ENCODE measurements at regions of chr14 and their contacts with region 1.

Region 1: DNA sequence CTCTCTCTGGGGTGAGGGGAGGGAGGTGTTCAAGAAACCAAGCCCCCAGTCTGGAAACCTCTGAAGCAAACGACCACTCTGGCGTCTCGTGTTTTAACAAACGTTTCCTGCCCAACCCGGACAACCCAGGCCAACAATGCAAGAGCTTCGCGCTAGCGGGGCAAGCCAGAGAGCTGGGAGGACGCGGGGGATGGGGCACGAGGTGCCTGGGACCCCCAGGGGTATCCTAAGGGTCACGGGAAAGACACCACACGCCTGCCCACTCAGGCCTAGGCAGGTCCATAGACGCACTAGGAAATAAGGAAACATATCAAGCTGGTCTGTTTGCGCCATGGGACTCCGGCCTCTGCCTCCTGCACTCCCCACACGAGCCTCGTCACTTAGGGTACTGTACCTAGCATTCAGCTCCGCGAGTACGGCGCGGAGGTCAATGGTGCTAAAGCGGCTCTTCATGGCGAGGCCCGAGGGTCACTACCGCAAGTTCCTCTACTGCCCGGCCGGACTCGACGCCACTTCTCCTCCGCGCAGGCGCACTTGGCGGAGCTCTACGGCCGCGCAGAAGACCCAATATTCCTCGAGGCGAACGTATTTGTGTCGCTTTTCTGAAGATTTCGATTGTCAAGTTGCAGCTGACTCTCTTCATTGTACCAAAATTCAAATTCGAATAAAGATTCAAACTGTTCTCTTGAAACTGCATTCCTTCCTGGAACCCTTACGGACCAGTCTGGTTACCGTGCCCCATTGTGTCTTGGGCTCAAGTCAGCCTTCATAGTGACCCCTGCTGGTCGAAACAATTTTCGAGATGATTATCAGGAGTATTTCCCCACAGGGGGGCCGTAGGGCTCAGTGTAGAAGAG is at the start of gene NEMF:
- DNase-seq: peak; percentile 78
- ATAC-seq: peak; percentile 83
- H3K4me3 Mint-ChIP-seq: peak within 1 kb of the TSS; percentile 99
- H3K27ac Mint-ChIP-seq: peak within 1 kb of the TSS; percentile 98
- H3K4me1 Mint-ChIP-seq: peaks cover 47% of the 10 kb centered on the region
- H3K27me3 Mint-ChIP-seq: no peaks in the 10 kb centered on the region
- CTCF ChIP-seq: peak; percentile 27
- total RNA-seq, gene NEMF: 99.1 and 110 TPM in 2 replicates

Region 2: DNA sequence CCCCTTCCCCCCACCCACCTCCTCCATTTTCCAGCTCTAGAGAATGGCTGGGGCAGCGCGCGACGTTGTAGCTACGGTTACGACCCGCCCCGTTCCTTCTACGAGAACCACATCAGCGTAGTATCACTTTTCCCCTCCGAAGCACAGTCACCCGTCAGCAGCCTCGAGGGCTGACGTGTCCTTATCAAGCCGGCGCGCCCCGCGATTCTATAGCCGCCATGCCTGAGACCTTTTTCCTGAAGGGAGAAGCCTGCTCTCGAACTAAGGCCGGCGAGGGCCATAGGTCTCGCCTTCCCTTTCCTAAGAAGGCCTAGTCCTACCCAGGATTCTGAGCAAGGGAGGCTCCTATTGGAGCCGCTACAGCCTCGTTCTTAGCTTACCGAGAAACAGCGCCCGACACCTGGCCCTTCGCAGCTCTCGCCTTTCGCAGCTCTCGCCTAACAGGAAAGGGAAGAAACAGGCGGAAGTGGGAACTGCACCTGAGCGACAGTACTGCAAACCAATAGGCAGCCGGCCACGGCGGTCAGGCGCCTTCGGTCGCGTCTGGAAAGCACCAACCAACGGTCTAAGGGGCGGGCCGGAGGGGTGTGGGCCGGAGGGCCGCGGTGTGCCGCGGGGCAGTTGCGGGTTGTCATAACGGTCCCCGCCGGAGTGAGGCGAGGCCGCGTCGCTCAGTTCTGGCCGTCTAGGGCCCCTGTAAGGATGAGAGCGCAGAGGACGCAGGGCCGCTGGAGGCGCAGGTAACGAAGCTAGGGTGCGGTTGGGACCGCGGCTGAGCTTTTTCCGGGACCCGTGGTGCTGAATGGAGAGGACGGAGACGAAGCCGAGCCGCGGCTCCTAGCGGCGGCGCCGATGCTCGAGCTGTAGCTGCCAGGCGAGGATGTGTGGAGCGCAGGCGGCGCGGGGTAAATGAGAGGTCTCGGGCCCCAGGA is 232.1 kb before region 1 on chr14 and contains the starts of genes MGAT2 and RPL36AL:
- CTCF ChIA-PET with region 1: interaction called, 3 read pairs
- POLR2A ChIA-PET with region 1: interaction called, 23 read pairs
- intact Hi-C with region 1: no loop called
- DNase-seq: peak; percentile 90
- ATAC-seq: peak; percentile 90
- H3K4me3 Mint-ChIP-seq: peak within 1 kb of the TSS; percentile 97
- H3K27ac Mint-ChIP-seq: peak within 1 kb of the TSS; percentile 97
- H3K4me1 Mint-ChIP-seq: peaks cover 61% of the 10 kb centered on the region
- H3K27me3 Mint-ChIP-seq: no peaks in the 10 kb centered on the region
- CTCF ChIP-seq: no peak
- total RNA-seq, gene MGAT2: 39.7 and 40.5 TPM in 2 replicates
- total RNA-seq, gene RPL36AL: 150 and 166 TPM in 2 replicates

Region 3: GRCh38 chr14:49783394-49784010 is 69.0 kb before region 1 on chr14:
- CTCF ChIA-PET with region 1: no interaction called
- POLR2A ChIA-PET with region 1: no interaction called
- intact Hi-C with region 1: loop called (anchors 5 kb)
- DNase-seq: no peak
- ATAC-seq: no peak
- H3K4me3 Mint-ChIP-seq: no peak overlapping the region
- H3K27ac Mint-ChIP-seq: no peak overlapping the region
- H3K4me1 Mint-ChIP-seq: peaks cover 3% of the 10 kb centered on the region
- H3K27me3 Mint-ChIP-seq: no peaks in the 10 kb centered on the region
- CTCF ChIP-seq: no peak

Region 4: DNA sequence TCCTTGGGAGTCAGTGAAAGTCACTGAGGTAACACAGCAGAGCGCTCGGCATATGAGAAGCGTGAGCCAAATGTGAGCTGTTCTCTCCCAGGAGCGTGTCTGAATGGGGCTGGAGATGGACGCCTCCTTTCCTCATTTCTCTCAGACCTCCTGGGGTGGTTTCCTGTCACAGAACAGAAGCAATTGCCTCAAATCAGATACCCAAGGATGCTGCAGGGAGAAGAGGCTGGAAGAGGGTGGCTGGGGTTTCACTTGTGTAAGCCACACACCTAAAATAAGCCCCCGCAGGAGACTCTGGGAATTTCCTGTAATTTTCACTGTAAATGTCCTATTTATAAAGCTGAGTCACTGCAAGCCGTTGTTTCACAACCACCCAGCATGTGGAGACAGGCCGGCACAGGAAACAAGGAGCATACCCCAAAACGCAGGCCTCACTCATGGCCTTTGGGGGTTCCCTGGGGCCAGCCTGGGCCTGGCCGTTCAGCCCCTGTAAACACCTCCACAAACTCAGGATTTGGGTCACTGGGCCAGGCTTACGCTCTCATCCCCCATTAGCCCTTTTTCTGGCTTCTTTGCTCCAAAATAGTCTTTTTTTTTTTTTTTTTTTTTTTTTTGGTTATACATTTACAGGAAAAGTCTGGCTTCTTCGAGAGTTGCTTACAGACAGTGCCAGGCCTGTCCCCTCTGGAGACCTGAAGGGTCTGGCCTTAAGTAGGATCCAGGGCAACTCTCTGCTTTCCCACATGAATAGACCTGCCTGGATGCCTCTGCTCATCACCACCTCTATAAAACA is 208.5 kb after region 1 on chr14:
- CTCF ChIA-PET with region 1: interaction called, 12 read pairs
- POLR2A ChIA-PET with region 1: interaction called, 33 read pairs
- intact Hi-C with region 1: loop called (anchors 1 kb)
- DNase-seq: no peak
- ATAC-seq: peak; percentile 0
- H3K4me3 Mint-ChIP-seq: peak overlapping the region; percentile 87
- H3K27ac Mint-ChIP-seq: peak overlapping the region; percentile 100
- H3K4me1 Mint-ChIP-seq: peaks cover 88% of the 10 kb centered on the region
- H3K27me3 Mint-ChIP-seq: no peaks in the 10 kb centered on the region
- CTCF ChIP-seq: no peak

Region 5: DNA sequence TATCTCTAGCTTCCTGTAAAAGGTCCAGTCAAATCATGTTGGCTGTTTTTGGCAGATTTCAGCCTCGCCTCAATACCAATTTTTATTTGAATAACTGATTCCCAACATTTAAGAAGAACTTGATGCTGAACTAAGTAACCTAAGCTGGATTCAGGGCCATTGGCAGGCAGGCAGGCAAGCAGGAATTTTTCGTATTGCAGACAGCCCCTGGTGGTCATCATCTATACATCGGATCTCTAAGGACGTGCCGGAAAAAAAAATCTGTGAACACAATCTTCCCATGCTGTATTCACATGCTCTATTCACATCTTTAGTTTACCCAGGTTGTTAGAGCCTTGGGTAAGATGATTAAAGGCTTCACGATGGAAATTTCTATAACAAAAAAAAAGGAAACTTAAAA is 256.8 kb after region 1 on chr14:
- CTCF ChIA-PET with region 1: interaction called, 17 read pairs
- POLR2A ChIA-PET with region 1: interaction called, 26 read pairs
- intact Hi-C with region 1: loop called (anchors 1 kb)
- DNase-seq: no peak
- ATAC-seq: no peak
- H3K4me3 Mint-ChIP-seq: no peak overlapping the region
- H3K27ac Mint-ChIP-seq: peak overlapping the region; percentile 20
- H3K4me1 Mint-ChIP-seq: peaks cover 46% of the 10 kb centered on the region
- H3K27me3 Mint-ChIP-seq: no peaks in the 10 kb centered on the region
- CTCF ChIP-seq: no peak

Region 6: GRCh38 chr14:50260511-50260910 is 408.0 kb after region 1 on chr14:
- CTCF ChIA-PET with region 1: no interaction called
- POLR2A ChIA-PET with region 1: no interaction called
- intact Hi-C with region 1: loop called (anchors 1 kb)
- DNase-seq: no peak
- ATAC-seq: peak; percentile 76
- H3K4me3 Mint-ChIP-seq: no peak overlapping the region
- H3K27ac Mint-ChIP-seq: no peak overlapping the region
- H3K4me1 Mint-ChIP-seq: no peaks in the 10 kb centered on the region
- H3K27me3 Mint-ChIP-seq: no peaks in the 10 kb centered on the region
- CTCF ChIP-seq: no peak

Region 7: GRCh38 chr14:50756300-50756699 is 903.8 kb after region 1 on chr14:
- CTCF ChIA-PET with region 1: no interaction called
- POLR2A ChIA-PET with region 1: no interaction called
- intact Hi-C with region 1: loop called (anchors 10 kb)
- DNase-seq: peak; percentile 28
- ATAC-seq: peak; percentile 91
- H3K4me3 Mint-ChIP-seq: no peak overlapping the region
- H3K27ac Mint-ChIP-seq: no peak overlapping the region
- H3K4me1 Mint-ChIP-seq: peaks cover 6% of the 10 kb centered on the region
- H3K27me3 Mint-ChIP-seq: no peaks in the 10 kb centered on the region
- CTCF ChIP-seq: no peak

Measured in activated B cell treated with CpG ODN at 0.5 μM for 24 hours (primary cell).